ENCODE measurements at regions of chr12 and their contacts with region 1.

Region 1: GRCh38 chr12:45833401-45833800 is 103.9 kb downstream of the ARID2 start:
- DNase-seq: no peak
- H3K4me3 ChIP-seq: no peak overlapping the region
- H3K27ac ChIP-seq: no peak overlapping the region
- H3K4me1 ChIP-seq: no peaks in the 10 kb centered on the region
- H3K27me3 ChIP-seq: no peaks in the 10 kb centered on the region
- CTCF ChIP-seq: no peak

Region 2: GRCh38 chr12:45762185-45763110 is 71.0 kb before region 1 on chr12:
- intact Hi-C with region 1: loop called (anchors 5 kb)
- DNase-seq: no peak
- H3K4me3 ChIP-seq: no peak overlapping the region
- H3K27ac ChIP-seq: no peak overlapping the region
- H3K4me1 ChIP-seq: peaks cover 0 to 13% of the 10 kb centered on the region in 2 donors
- H3K27me3 ChIP-seq: no peaks in the 10 kb centered on the region
- CTCF ChIP-seq: peak in 2 of 3 experiments; percentile 26 to 58